ENCODE measurements at regions of chr22 and their contacts with region 1.

Region 1: GRCh38 chr22:46563381-46564083 is 26.1 kb upstream of the CELSR1 start:
- DNase-seq: peak; percentile 87
- ATAC-seq: peak; percentile 86
- H3K4me3 Mint-ChIP-seq: no peak overlapping the region
- H3K27ac Mint-ChIP-seq: no peak overlapping the region
- H3K4me1 Mint-ChIP-seq: peaks cover 8% of the 10 kb centered on the region
- H3K27me3 Mint-ChIP-seq: no peaks in the 10 kb centered on the region
- CTCF ChIP-seq: peak; percentile 82

Region 2: GRCh38 chr22:46501701-46502100 is 61.8 kb before region 1 on chr22:
- CTCF ChIA-PET with region 1: no interaction called
- POLR2A ChIA-PET with region 1: no interaction called
- intact Hi-C with region 1: no loop called
- DNase-seq: no peak
- ATAC-seq: no peak
- H3K4me3 Mint-ChIP-seq: no peak overlapping the region
- H3K27ac Mint-ChIP-seq: no peak overlapping the region
- H3K4me1 Mint-ChIP-seq: peaks cover 11% of the 10 kb centered on the region
- H3K27me3 Mint-ChIP-seq: peaks cover 10% of the 10 kb centered on the region
- CTCF ChIP-seq: no peak

Region 3: GRCh38 chr22:46551321-46551720 is 12.2 kb before region 1 on chr22:
- CTCF ChIA-PET with region 1: interaction called, 11 read pairs
- POLR2A ChIA-PET with region 1: no interaction called
- intact Hi-C with region 1: no loop called
- DNase-seq: no peak
- ATAC-seq: no peak
- H3K4me3 Mint-ChIP-seq: no peak overlapping the region
- H3K27ac Mint-ChIP-seq: no peak overlapping the region
- H3K4me1 Mint-ChIP-seq: no peaks in the 10 kb centered on the region
- H3K27me3 Mint-ChIP-seq: peaks cover 15% of the 10 kb centered on the region
- CTCF ChIP-seq: no peak

Region 4: GRCh38 chr22:46598737-46599424 is 35.3 kb after region 1 on chr22:
- CTCF ChIA-PET with region 1: no interaction called
- POLR2A ChIA-PET with region 1: no interaction called
- intact Hi-C with region 1: no loop called
- DNase-seq: no peak
- ATAC-seq: no peak
- H3K4me3 Mint-ChIP-seq: no peak overlapping the region
- H3K27ac Mint-ChIP-seq: no peak overlapping the region
- H3K4me1 Mint-ChIP-seq: peaks cover 4% of the 10 kb centered on the region
- H3K27me3 Mint-ChIP-seq: no peaks in the 10 kb centered on the region
- CTCF ChIP-seq: no peak

Region 5: DNA sequence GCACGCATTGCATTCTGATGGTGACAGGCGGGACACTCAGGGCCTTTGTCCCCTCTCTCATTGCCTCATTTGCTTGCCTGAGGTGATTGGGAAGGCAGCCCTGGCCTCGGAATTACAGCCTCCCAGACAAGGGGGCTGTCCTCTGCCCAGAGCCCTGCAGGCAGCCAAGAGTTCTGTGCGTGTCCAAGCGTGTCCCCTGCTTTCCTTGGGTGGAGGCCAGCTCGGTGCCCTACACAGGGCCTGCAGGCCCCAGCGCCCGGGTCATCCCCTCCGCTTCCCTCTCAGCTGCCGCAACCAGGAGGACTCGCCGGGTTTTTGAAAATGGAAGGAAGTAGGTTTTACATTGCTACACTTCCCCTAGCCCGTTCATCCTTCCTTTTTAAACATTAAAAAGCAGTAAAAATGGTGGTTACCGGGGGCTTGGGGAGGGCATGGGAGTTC is 58.6 kb after region 1 on chr22:
- CTCF ChIA-PET with region 1: interaction called, 13 read pairs
- POLR2A ChIA-PET with region 1: no interaction called
- intact Hi-C with region 1: no loop called
- DNase-seq: no peak
- ATAC-seq: no peak
- H3K4me3 Mint-ChIP-seq: no peak overlapping the region
- H3K27ac Mint-ChIP-seq: no peak overlapping the region
- H3K4me1 Mint-ChIP-seq: no peaks in the 10 kb centered on the region
- H3K27me3 Mint-ChIP-seq: no peaks in the 10 kb centered on the region
- CTCF ChIP-seq: no peak

Region 6: DNA sequence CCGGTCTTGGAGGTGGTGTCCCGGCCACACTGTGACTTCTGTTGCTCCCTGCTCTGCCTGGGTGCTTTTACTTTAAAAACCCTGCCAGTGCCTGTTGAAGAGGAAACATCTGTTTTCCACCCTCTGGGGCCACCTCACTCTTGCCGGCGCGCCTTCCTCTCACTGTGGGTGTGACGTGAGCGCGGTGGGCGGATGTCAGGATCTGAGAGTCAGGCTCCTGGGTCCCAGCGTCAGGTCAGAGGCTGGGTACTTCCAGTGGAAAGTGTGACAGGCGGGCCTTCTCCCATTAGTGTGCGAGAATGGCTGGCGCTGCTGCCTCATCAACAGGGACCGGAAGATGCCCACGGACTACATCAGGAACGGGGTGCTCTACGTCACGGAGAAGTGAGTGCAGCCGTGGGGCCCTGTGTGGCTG is 110.8 kb after region 1 on chr22:
- CTCF ChIA-PET with region 1: interaction called, 18 read pairs
- POLR2A ChIA-PET with region 1: no interaction called
- intact Hi-C with region 1: no loop called
- DNase-seq: peak; percentile 100
- ATAC-seq: peak; percentile 91
- H3K4me3 Mint-ChIP-seq: peak overlapping the region; percentile 85
- H3K27ac Mint-ChIP-seq: peak overlapping the region; percentile 95
- H3K4me1 Mint-ChIP-seq: peaks cover 44% of the 10 kb centered on the region
- H3K27me3 Mint-ChIP-seq: no peaks in the 10 kb centered on the region
- CTCF ChIP-seq: no peak

Region 7: DNA sequence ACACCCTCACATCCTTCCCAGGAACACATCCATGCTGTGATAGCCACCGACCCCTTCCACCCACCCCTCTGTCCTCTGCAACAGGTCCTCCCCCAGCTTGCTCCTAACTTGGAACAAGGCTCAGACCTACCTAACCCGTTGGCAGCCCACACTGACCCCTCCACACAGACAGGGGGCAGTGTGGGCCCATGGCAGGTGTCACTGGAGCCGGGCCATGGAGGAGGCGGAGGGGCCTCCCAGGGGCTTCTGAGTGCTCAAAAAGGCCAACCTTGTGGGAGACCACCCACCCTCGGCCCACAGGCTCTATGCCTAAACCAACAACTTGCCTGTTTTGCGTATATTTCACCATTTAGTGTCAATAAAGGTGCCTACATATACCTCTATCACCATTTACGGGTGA is 117.5 kb after region 1 on chr22:
- CTCF ChIA-PET with region 1: interaction called, 12 read pairs
- POLR2A ChIA-PET with region 1: interaction called, 3 read pairs
- intact Hi-C with region 1: no loop called
- DNase-seq: peak; percentile 44
- ATAC-seq: peak; percentile 71
- H3K4me3 Mint-ChIP-seq: no peak overlapping the region
- H3K27ac Mint-ChIP-seq: no peak overlapping the region
- H3K4me1 Mint-ChIP-seq: peaks cover 27% of the 10 kb centered on the region
- H3K27me3 Mint-ChIP-seq: no peaks in the 10 kb centered on the region
- CTCF ChIP-seq: peak; percentile 59

Region 8: GRCh38 chr22:46762238-46763050 is 198.9 kb after region 1 on chr22 and contains the start of gene TBC1D22A:
- CTCF ChIA-PET with region 1: interaction called, 19 read pairs
- POLR2A ChIA-PET with region 1: no interaction called
- intact Hi-C with region 1: no loop called
- DNase-seq: peak; percentile 96
- ATAC-seq: peak; percentile 91
- H3K4me3 Mint-ChIP-seq: peak within 1 kb of the TSS; percentile 94
- H3K27ac Mint-ChIP-seq: peak within 1 kb of the TSS; percentile 99
- H3K4me1 Mint-ChIP-seq: peaks cover 51% of the 10 kb centered on the region
- H3K27me3 Mint-ChIP-seq: no peaks in the 10 kb centered on the region
- CTCF ChIP-seq: no peak
- total RNA-seq, gene TBC1D22A: 41.0 to 42.8 TPM